ENCODE measurements at regions of chr20 and their contacts with region 1.

Region 1: GRCh38 chr20:45771182-45771759 is 20.4 kb downstream of the WFDC3 start:
- DNase-seq: peak; percentile 59 to 81 (median 74)
- ATAC-seq: peak; percentile 48 to 86 (median 84)
- H3K4me3 ChIP-seq: no peak overlapping the region
- H3K27ac ChIP-seq: peak overlapping the region in 6 of 12 donors; percentile 11 to 77 (median 32)
- H3K4me1 ChIP-seq: peaks cover 0 to 11% (median 5%) of the 10 kb centered on the region in 12 donors
- H3K27me3 ChIP-seq: peaks cover 0 to 3% (median 0%) of the 10 kb centered on the region in 9 donors
- CTCF ChIP-seq: peak; percentile 89 to 98 (median 92)
- POLR2A ChIP-seq: no peak

Region 2: GRCh38 chr20:45322952-45323383 is 448.3 kb before region 1 on chr20:
- intact Hi-C with region 1: loop called (anchors 1 to 5 kb)
- DNase-seq: peak in 4 of 5 donors; percentile 63 to 80 (median 74)
- ATAC-seq: peak; percentile 77 to 82 (median 80)
- H3K4me3 ChIP-seq: no peak overlapping the region
- H3K27ac ChIP-seq: peak overlapping the region in 2 of 12 donors; percentile 41 to 42
- H3K4me1 ChIP-seq: peaks cover 0 to 22% (median 0%) of the 10 kb centered on the region in 12 donors
- H3K27me3 ChIP-seq: peaks cover 0 to 2% (median 0%) of the 10 kb centered on the region in 9 donors
- CTCF ChIP-seq: peak; percentile 17 to 63 (median 46)
- POLR2A ChIP-seq: no peak

Region 3: DNA sequence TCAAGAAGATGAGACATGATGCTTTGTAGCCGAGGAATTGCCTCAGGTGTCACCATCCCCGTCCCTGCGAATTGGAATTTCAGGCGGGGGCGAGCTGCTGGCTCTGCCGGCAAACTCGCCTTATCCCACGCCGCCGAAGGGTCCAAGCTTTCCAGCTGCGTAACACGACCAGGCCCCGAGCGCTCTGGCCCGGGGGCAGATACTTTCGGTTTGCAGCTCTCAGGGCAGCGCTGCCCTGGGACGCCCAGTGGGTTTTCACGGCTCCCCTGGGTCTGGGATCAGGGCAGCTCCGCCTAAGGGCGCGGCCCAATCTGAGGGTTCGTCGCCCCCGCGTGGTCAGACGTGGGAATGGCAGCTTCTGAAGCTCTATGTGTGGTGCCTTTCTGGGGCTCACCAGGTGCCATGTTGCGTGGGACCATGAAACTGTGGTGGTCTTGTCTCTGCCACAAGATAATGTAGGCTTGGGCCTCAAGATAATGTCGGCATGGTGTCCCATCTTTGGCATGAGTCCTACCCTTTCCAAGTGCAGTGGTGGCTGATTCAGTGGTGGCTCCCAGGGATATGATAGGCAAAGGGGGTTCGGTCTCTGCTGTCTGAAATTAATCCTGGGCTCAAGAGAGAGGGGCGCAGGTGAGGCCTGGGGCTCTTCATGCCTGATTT is 334.4 kb before region 1 on chr20:
- intact Hi-C with region 1: loop called in 3 of 10 experiments (anchors 5 to 10 kb)
- DNase-seq: peak; percentile 88 to 94 (median 90)
- ATAC-seq: peak; percentile 95 to 97 (median 96)
- H3K4me3 ChIP-seq: peak overlapping the region; percentile 39 to 77 (median 62)
- H3K27ac ChIP-seq: peak overlapping the region in 11 of 12 donors; percentile 65 to 85 (median 73)
- H3K4me1 ChIP-seq: peaks cover 0 to 15% (median 7%) of the 10 kb centered on the region in 12 donors
- H3K27me3 ChIP-seq: no peaks in the 10 kb centered on the region
- CTCF ChIP-seq: peak; percentile 93 to 100 (median 96)
- POLR2A ChIP-seq: peak in 1 of 2 donors; percentile 36

Region 4: DNA sequence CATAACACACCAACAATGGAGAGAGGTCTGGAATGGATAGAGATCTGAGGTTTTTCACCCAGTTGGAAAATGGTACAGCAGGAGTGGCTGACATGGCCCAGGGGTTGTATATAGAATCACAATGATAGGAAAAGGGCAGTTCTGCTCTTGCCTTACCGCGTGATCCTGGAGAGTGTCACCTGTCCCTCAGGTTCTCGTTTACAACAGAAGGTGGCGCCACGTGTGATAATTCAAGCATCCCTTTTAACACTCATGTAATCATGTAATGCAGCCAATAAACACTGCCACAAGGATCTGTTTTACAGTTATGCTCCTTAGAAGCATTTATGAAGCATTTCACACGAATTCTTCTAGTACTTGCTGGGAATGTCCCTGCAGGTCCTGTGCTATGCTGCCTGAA is 314.6 kb before region 1 on chr20:
- intact Hi-C with region 1: loop called in 6 of 10 experiments (anchors 5 to 10 kb)
- DNase-seq: no peak
- ATAC-seq: peak in 1 of 4 donors; percentile 48
- H3K4me3 ChIP-seq: no peak overlapping the region
- H3K27ac ChIP-seq: no peak overlapping the region
- H3K4me1 ChIP-seq: no peaks in the 10 kb centered on the region
- H3K27me3 ChIP-seq: no peaks in the 10 kb centered on the region
- CTCF ChIP-seq: peak in 8 of 12 donors; percentile 7 to 30 (median 14)
- POLR2A ChIP-seq: no peak

Region 5: DNA sequence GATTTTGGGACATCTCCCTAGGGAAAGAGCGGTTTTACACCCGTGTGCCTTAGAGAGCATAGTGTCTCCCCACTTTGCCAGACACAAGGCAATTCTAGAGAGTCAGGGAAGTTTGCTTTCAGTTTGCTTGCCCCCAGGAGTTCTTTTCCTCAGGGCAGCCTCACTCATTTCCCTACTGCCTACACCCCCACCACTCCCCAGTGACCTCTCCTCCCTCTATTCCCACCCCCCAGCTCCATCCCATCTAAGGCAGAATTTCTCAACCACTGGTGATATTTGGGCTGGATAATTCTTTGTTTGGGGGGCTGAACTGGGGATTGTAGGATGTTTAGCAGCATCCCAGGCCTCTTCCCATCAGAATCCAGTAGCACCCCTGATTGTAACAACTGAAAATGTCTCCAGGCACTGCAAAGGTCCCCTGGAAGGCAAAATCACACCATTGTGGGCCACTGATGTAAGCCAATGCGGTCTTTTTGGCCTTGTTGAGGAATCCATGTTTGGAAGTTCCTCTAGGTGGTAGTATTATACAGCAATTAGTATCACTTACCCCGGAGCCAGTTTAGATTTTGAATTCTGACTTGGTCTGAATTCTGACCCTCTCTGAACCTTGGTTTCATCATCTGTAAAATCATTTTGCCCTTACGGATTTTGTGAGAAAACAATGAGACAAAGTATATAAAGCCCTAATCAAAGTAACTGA is 225.4 kb before region 1 on chr20:
- intact Hi-C with region 1: loop called in 4 of 10 experiments (anchors 1 to 10 kb)
- DNase-seq: no peak
- ATAC-seq: no peak
- H3K4me3 ChIP-seq: no peak overlapping the region
- H3K27ac ChIP-seq: no peak overlapping the region
- H3K4me1 ChIP-seq: no peaks in the 10 kb centered on the region
- H3K27me3 ChIP-seq: peaks cover 0 to 19% (median 4%) of the 10 kb centered on the region in 9 donors
- CTCF ChIP-seq: peak in 8 of 12 donors; percentile 6 to 41 (median 24)
- POLR2A ChIP-seq: no peak

Region 6: DNA sequence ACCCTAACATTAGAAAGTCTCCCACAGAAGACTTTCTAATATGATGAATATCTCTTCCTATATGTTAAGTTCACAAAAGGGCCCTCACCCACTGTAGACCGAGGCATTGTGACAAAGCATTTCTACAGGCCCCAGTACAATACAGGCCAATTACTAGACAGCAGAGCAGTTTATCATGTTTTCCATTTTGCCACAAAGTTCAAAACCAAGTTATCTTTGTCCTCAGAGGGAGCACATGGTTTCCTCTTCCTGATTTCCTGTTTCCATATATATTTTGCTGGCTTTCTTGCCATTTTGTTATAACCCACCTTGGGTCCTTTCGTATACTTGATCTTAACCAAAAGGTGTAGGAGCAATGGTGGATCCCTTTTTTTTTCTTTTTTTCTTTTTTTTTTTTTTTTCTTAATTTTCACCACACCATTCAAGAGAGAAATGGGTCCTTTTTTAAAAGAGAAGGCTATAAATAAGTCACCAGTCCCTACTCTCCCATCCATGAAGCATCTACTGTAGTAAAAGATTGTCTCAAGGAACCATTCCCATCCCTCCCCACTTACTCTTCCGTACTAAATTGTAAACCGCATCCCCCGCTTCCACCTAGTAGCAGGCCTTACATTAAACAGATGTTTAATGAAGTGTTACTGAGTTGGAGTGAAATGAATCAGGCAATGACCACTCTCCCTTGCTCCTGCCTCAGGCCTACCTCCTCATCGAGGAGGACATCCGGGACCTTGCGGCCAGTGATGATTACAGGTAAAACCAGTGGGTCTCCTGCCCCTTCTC is 39.1 kb after region 1 on chr20:
- intact Hi-C with region 1: no loop called
- DNase-seq: no peak
- ATAC-seq: no peak
- H3K4me3 ChIP-seq: no peak overlapping the region
- H3K27ac ChIP-seq: no peak overlapping the region
- H3K4me1 ChIP-seq: peaks cover 0 to 12% (median 6%) of the 10 kb centered on the region in 12 donors
- H3K27me3 ChIP-seq: no peaks in the 10 kb centered on the region
- CTCF ChIP-seq: no peak
- POLR2A ChIP-seq: no peak

Measured in heart left ventricle (tissue), 16 donors.